ENCODE measurements at regions of chr16 and their contacts with region 1.

Region 1: DNA sequence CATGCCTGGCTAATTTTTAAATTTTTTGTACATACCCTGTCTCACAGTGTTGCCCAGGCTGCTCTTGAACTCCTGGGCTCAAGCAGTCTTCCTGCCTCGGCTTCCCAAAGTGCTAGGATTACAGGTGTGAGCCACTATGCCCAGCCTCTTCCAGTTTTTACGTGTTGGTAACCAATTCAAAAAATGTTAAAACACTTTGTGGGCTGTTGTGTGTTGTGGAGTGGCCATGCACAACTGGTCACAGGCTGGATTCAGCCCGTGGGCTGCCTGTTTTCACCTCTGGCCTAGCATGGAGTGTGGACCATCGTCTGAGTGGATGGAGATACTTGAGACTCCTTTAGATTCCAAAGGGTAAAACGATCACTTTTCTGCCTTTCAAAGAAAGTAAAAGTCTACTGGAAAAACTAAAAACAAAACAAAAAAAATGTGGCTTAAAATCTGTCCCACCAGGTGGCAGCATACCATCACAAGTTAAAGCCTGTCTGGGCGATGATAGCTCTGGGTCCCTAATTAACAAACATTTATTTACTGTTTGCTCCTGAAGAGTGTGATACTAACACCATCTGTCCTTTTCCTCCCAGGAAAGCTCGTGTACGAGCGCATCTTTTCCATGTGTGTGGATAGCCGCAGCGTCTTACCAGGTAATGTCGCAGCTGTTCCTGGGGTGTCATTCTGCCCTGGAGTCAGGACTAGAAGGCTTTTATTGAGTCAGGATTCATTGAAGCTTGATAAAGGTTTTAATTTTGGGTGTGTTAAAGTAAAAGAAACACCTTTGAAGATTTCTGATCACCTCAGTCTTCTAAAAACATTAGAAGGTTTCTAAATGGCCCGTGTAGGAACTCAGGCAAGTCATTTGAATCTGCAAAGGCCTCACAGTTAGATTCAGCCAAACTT is 45.8 kb downstream of the VPS35L start:
- DNase-seq: peak in 3 of 5 donors; percentile 37 to 63 (median 49)
- H3K4me3 ChIP-seq: no peak overlapping the region
- H3K27ac ChIP-seq: peak overlapping the region in 1 of 2 donors; percentile 24
- H3K4me1 ChIP-seq: peaks cover 4% of the 10 kb centered on the region
- H3K27me3 ChIP-seq: no peaks in the 10 kb centered on the region
- CTCF ChIP-seq: peak; percentile 68 to 85 (median 74)
- EP300 ChIP-seq: no peak
- POLR2A ChIP-seq: no peak

Region 2: GRCh38 chr16:19419691-19420060 is 181.7 kb before region 1 on chr16:
- intact Hi-C with region 1: no loop called
- DNase-seq: no peak
- H3K4me3 ChIP-seq: no peak overlapping the region
- H3K27ac ChIP-seq: no peak overlapping the region
- H3K4me1 ChIP-seq: no peaks in the 10 kb centered on the region
- H3K27me3 ChIP-seq: no peaks in the 10 kb centered on the region
- CTCF ChIP-seq: no peak
- EP300 ChIP-seq: no peak
- POLR2A ChIP-seq: no peak

Region 3: DNA sequence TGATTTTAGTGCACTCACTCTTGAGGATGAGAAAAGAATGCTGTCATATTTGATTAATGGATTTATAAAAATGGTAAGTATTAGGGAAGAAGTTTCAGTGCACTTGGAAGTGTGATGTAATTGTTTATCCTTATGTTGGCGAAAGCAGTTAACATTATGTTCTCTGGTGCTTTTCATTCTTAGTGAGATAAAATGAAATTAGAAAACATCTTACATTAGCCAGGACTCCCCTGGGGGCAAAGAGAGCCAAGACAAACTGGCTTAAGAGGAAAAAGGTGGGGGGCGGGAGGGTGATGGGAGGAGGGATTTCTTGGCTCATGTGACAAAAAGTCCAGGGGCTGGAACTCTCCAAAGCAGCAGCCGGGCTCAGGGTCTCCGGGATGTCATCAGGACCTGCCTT is 43.5 kb after region 1 on chr16:
- intact Hi-C with region 1: no loop called
- DNase-seq: peak; percentile 53 to 83 (median 72)
- H3K4me3 ChIP-seq: no peak overlapping the region
- H3K27ac ChIP-seq: no peak overlapping the region
- H3K4me1 ChIP-seq: peaks cover 9% of the 10 kb centered on the region
- H3K27me3 ChIP-seq: no peaks in the 10 kb centered on the region
- CTCF ChIP-seq: no peak
- EP300 ChIP-seq: no peak
- POLR2A ChIP-seq: no peak

Region 4: DNA sequence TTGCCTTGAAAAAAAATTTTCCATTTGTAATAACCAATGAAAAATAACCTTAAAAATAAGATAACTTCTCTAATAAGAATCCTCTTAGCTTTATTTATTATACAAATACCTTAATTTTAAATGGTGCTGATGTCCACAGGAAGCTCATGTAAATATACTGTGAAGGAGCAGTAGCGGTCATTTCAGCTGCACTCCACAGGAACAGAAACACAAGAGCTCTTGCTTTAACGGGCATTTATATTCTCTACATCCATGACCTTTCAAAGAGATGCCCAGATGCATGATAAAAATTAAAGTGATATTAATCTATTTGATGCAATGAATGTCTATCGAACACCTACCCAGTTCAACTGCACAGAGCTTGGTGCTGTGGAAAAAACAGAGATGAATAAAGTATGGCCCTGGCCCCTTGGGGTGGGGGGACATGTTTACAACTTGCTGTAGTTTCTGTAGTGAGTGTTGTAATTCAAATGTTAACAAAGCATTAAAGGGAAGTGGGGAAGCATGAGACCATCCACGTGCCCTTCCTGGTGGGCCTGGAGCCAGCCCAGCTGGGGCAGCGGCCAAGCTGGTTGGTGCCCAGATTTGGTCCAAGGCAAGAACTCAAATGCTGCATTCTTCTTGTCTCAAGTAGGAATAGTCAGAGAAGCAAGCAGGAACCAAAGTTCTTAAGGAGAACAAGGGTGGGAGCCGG is 164.7 kb after region 1 on chr16:
- intact Hi-C with region 1: loop called in 1 of 4 experiments (anchors 10 kb)
- DNase-seq: peak in 1 of 5 donors; percentile 42
- H3K4me3 ChIP-seq: no peak overlapping the region
- H3K27ac ChIP-seq: no peak overlapping the region
- H3K4me1 ChIP-seq: peaks cover 2% of the 10 kb centered on the region
- H3K27me3 ChIP-seq: no peaks in the 10 kb centered on the region
- CTCF ChIP-seq: no peak
- EP300 ChIP-seq: no peak
- POLR2A ChIP-seq: no peak

Region 5: GRCh38 chr16:19948186-19949104 is 347.1 kb after region 1 on chr16:
- intact Hi-C with region 1: no loop called
- DNase-seq: no peak
- H3K4me3 ChIP-seq: no peak overlapping the region
- H3K27ac ChIP-seq: no peak overlapping the region
- H3K4me1 ChIP-seq: no peaks in the 10 kb centered on the region
- H3K27me3 ChIP-seq: no peaks in the 10 kb centered on the region
- CTCF ChIP-seq: no peak
- EP300 ChIP-seq: no peak
- POLR2A ChIP-seq: no peak

Measured in ovary (tissue), 10 donors.